ENCODE measurements at regions of chr10 and their contacts with region 1.

Region 1: GRCh38 chr10:95363303-95363912 is 72.6 kb upstream of the PDLIM1 start:
- DNase-seq: no peak
- H3K4me3 ChIP-seq: no peak overlapping the region
- H3K27ac ChIP-seq: peak overlapping the region in 1 of 4 donors; percentile 13
- H3K4me1 ChIP-seq: peaks cover 11 to 59% (median 22%) of the 10 kb centered on the region in 3 donors
- H3K27me3 ChIP-seq: no peaks in the 10 kb centered on the region
- CTCF ChIP-seq: peak; percentile 81 to 92 (median 89)
- POLR2A ChIP-seq: no peak

Region 2: DNA sequence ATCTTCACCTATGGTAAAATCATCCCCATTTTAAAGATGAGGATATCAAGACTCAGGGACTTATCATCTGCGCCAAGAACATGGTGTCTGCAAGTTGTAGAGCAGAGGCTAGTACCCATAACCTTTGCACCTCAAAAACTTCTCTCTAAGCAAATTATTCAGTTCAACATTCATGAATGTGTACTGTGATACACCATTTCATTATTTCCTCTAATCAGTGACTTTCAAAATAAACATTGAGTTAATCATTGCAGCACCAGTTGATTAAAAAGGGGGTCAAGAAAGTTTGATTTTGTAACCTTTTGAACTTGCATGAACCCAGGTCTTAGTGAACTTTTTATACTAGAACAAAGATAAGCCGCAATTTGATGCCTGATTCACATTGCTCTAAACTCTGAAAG is 246.5 kb before region 1 on chr10:
- intact Hi-C with region 1: no loop called
- DNase-seq: no peak
- H3K4me3 ChIP-seq: no peak overlapping the region
- H3K27ac ChIP-seq: no peak overlapping the region
- H3K4me1 ChIP-seq: no peaks in the 10 kb centered on the region
- H3K27me3 ChIP-seq: no peaks in the 10 kb centered on the region
- CTCF ChIP-seq: no peak
- POLR2A ChIP-seq: no peak

Region 3: DNA sequence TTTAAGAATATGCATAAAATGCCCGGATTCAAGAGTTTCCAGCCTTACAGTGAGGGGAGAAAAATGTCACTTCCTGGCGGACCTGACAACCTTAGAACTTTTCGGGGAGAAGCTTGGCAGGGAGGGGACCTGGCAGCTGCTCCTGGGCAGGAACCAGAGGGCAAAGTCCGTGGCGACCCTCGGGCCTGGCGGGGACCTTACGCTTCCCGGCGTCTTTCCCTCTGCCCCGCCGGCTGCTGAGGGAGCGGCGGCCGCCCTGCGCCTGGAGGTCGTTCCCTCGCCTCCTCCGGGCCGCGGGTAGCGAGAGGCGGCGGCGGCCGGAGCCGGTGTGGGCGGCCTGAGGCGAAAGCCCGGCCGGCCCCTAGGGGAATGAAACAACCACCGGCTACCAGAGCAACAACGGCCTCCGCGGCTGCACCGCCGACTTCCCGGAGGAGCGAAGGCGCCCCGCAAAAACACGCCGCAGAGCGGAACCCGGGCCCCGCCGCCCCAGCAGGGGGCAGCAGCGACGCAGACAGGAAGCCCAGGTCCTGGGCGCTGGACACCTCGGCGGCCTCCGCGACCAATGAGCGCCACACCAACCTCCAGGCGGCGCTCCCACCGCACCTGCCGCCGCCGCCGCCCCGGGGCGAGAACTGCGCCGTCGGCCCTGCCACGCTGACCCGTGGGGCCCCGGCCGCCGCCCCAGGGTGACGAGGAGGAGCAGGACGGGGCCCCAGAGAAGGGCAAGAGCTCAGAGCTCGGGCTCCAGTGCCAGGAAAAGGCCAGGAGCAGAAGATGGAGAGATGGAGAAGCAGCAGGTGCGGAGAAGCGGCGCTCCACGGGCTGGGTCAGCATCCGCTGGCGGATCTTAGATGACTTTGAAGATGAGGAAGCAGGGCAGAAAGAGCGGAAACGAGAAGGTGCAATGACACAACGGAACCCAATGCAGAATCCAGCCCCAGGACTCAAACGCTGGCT is 179.9 kb before region 1 on chr10:
- intact Hi-C with region 1: loop called (anchors 10 kb)
- DNase-seq: peak; percentile 18
- H3K4me3 ChIP-seq: peak overlapping the region; percentile 46 to 73 (median 60)
- H3K27ac ChIP-seq: peak overlapping the region; percentile 71 to 85 (median 78)
- H3K4me1 ChIP-seq: peaks cover 0 to 15% (median 3%) of the 10 kb centered on the region in 3 donors
- H3K27me3 ChIP-seq: no peaks in the 10 kb centered on the region
- CTCF ChIP-seq: peak; percentile 84 to 98 (median 92)
- POLR2A ChIP-seq: peak in 1 of 4 donors; percentile 22

Region 4: DNA sequence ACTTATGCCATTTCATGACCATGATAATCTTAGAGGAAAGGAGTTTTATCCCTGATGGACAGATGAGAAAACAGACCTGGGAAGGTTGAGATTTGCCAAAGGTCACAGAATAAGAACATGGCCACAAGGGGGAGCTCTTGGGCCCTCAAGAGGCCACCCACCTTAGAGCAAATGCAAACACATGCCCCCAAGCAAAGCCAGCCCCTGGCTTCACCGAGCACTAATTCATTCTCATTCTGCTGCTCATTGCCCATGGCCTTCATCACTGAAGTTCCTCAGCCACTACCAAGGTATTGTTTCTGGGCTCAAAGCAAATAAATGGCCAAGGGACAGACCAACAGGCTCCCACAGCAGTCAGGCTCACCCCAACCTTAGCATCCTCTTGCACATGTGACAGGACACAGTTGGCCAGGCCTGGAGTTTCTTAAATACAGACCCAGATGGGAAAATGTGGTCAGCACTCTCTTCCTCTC is 116.8 kb before region 1 on chr10:
- intact Hi-C with region 1: loop called (anchors 2 kb)
- DNase-seq: no peak
- H3K4me3 ChIP-seq: no peak overlapping the region
- H3K27ac ChIP-seq: peak overlapping the region; percentile 58 to 84 (median 76)
- H3K4me1 ChIP-seq: peaks cover 15 to 49% (median 28%) of the 10 kb centered on the region in 3 donors
- H3K27me3 ChIP-seq: no peaks in the 10 kb centered on the region
- CTCF ChIP-seq: peak; percentile 76 to 88 (median 81)
- POLR2A ChIP-seq: no peak

Measured in esophagus squamous epithelium (tissue), 5 donors.